Cardiac septum (tissue), 1 donor: ENCODE measurements at regions of chr22 and their contacts with region 1.

Region 1: GRCh38 chr22:20016734-20017621 is at the start of gene ARVCF:
- DNase-seq: peak; percentile 97
- total RNA-seq, gene ARVCF: 46.8 TPM

Region 2: GRCh38 chr22:19877626-19878339 is 139.2 kb before region 1 on chr22:
- intact Hi-C with region 1: no loop called
- DNase-seq: peak; percentile 67

Region 3: GRCh38 chr22:19970479-19971275 is 46.3 kb before region 1 on chr22:
- intact Hi-C with region 1: loop called (anchors 1 kb)
- DNase-seq: peak; percentile 90

Region 4: DNA sequence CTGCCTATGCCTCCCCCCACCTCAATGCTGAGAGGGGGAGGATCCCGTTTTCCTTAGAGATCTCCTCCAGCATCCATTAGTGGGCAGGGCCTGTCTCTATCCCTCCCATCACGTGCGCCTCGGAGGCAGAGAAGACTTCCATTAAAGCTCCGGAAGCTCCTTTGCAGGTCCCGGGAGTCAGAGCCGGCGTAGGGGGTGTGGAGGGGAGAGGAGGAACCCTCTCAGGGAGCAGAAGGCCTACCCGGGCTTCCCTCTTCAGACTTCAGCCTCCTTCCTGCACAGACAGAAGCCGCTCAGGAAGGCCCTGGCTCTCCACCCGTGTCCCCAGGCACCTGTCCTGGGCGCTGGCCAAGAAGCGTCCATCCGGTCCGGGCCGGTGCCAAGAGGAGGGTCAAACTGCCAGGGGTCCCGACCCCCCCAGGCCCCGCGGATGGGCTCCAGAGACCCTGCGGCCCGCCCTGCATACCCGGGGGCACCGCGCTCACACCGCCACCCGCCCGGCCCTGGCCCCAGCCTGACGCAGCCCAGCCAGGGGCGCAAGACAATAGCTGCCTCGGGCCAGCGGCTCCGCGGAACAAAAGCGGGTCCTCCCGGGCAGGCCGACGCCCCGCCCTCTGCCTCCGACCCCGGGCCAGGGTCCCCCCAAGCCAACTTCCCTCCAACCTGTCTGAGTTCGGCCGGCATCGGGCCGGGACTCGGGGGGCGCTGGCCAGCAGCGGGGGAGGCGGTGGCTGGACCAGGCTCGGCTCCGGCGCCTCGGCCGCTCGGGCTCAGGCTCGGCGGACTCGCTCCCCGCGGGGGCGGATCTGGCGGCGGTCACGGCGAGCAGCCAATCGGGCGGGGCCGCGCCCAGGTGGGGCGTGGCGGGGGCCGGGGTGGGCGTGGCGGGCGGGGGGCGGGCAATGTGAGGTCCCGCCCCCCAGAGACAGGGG is 30.3 kb before region 1 on chr22:
- intact Hi-C with region 1: loop called (anchors 1 kb)
- DNase-seq: peak; percentile 90

Region 5: DNA sequence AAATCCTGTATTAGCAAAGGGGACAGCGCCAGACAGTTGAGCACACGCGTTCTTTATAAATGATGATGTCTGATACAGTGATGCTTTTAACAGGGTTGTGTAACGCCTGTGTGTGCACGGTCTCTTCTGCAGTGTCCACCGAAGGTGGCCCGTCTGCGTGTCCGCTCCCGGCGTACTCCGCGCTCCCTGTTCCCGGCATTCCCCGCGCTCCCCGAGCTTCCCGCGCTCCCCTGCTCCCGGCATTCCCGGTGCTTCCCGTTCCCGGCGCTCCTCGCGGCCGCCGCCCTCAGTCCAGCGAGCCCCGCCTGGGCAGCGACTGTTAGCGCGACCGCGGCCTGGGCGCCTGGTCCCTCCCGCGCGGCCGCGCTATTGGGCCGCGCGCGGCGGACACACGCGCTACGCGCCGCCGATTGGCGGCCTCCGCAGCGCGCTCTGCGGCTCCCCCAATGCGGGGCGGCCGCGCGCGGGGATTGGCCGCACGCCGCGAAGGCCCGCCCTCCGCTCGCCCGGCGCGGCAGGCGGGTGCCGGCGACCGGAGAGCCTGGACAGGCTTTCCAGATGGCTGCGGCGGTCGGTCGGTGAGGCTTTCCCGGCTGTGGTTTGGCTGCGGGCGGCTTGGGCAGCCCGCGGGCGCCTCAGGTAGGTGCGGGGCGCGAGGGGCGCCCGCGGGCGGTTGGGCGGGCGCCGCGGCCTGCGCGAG is 62.9 kb after region 1 on chr22 and contains the start of gene DGCR8:
- intact Hi-C with region 1: loop called (anchors 2 kb)
- DNase-seq: peak; percentile 97
- total RNA-seq, gene DGCR8: 19.1 TPM

Region 6: GRCh38 chr22:20116951-20117645 is 100.1 kb after region 1 on chr22 and contains the start of gene TRMT2A:
- intact Hi-C with region 1: loop called (anchors 5 kb)
- DNase-seq: peak; percentile 98
- total RNA-seq, gene TRMT2A: 24.0 TPM

Region 7: DNA sequence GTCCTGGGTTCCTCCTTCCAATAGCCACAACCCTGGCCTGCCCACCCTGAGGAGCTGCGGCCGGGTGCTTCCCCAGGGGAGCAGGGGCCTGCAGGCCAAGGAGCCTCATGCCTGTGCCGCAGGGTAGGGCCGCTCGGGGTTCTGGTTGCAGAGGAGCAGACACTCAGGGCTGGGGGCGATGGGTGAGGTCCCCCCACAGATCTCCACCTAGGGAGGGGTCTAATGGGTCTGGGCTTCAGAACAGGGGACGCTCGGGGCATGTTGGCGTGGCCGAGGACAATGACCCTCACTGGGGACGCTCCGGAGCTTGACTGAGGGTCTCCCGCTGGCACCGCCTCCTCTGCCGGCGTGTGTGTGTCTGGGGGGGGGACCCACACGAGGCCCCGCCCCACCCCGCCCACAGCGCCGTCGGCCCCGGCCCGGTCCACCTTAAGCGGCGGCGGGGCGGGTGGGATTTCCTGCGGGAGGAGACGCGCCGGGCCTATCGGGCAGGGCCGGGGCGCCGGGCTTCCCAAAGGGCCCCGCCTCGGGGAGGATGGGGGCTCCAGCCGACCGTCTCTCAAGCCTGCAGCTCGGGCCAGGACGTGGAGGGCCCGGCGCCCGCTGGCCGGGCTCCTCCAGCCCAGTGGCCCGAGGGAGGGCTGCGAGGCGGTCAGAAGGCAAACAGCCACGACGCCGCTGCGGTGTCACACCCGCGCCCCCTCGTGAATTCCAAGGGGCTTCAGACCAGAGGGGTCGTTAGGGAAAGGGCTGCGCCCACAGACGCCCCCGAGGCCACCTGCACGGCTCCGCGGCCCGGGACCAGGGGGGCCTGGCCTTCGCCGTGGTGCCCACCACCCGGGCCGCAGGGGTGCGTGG is 114.0 kb after region 1 on chr22:
- intact Hi-C with region 1: loop called (anchors 2 kb)
- DNase-seq: peak; percentile 91

Region 8: DNA sequence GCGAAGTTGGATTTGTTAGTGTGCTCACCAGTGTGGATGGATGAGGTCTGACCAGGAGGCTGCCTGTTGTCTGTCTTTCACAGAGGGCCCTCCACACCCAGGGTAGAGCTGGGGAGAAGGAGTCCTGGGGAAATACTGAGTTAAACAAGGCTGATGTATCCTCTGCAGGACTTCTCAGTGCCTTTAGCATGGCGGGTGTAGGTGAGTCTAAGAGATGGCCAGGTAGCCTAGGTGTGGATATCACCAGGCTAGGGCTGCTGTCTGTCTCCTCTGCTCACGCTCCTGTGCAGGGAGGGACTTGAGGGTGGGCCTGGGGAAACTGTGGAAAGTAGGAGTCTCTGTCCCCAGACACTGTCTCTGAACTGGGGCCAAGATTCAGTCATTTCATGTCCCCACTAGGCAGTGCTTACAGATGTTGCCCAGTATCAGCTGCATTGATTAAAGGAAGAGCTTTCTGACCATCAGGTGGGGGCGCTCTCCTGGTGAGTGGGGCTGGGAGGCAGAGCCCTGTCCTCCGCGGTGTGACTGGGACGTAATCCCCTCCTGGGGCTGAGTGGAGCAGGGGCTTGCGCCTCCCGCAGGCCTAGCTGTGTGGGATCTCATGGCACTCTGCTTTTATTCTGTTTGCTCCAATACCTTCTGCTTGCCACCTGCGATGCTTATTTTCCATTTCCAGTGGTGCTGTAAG is 169.3 kb after region 1 on chr22:
- intact Hi-C with region 1: no loop called
- DNase-seq: no peak